GM12878 (cell line): ENCODE measurements at regions of chr9 and their contacts with region 1.

Region 1: GRCh38 chr9:38195737-38196161 is 126.7 kb upstream of the SHB start:
- DNase-seq: no peak
- ATAC-seq: no peak
- H3K4me3 ChIP-seq: no peak overlapping the region
- H3K27ac ChIP-seq: no peak overlapping the region
- H3K4me1 ChIP-seq: no peaks in the 10 kb centered on the region; the same call in 1 of the 2 replicates
- H3K27me3 ChIP-seq: no peaks in the 10 kb centered on the region; a peak in 1 of 4 replicates
- CTCF ChIP-seq: no peak
- EP300 ChIP-seq: no peak
- POLR2A ChIP-seq: no peak
- RAD21 ChIP-seq: no peak

Region 2: GRCh38 chr9:37880916-37881479 is 314.8 kb before region 1 on chr9:
- CTCF ChIA-PET with region 1: no interaction called
- POLR2A ChIA-PET with region 1: interaction called, 10 read pairs
- RAD21 ChIA-PET with region 1: no interaction called
- SMC1A ChIA-PET with region 1: no interaction called
- in situ Hi-C with region 1: no loop called
- intact Hi-C with region 1: no loop called
- DNase-seq: no peak
- ATAC-seq: no peak
- H3K4me3 ChIP-seq: no peak overlapping the region
- H3K27ac ChIP-seq: no peak overlapping the region
- H3K4me1 ChIP-seq: no peaks in the 10 kb centered on the region
- H3K27me3 ChIP-seq: no peaks in the 10 kb centered on the region
- CTCF ChIP-seq: no peak
- EP300 ChIP-seq: no peak
- POLR2A ChIP-seq: no peak
- RAD21 ChIP-seq: no peak

Region 3: GRCh38 chr9:38079461-38080031 is 116.2 kb before region 1 on chr9:
- CTCF ChIA-PET with region 1: no interaction called
- POLR2A ChIA-PET with region 1: no interaction called
- RAD21 ChIA-PET with region 1: no interaction called
- SMC1A ChIA-PET with region 1: no interaction called
- in situ Hi-C with region 1: no loop called
- intact Hi-C with region 1: no loop called
- DNase-seq: no peak
- ATAC-seq: no peak
- H3K4me3 ChIP-seq: no peak overlapping the region
- H3K27ac ChIP-seq: no peak overlapping the region
- H3K4me1 ChIP-seq: no peaks in the 10 kb centered on the region
- H3K27me3 ChIP-seq: no peaks in the 10 kb centered on the region
- CTCF ChIP-seq: no peak
- EP300 ChIP-seq: no peak
- POLR2A ChIP-seq: no peak
- RAD21 ChIP-seq: no peak

Region 4: DNA sequence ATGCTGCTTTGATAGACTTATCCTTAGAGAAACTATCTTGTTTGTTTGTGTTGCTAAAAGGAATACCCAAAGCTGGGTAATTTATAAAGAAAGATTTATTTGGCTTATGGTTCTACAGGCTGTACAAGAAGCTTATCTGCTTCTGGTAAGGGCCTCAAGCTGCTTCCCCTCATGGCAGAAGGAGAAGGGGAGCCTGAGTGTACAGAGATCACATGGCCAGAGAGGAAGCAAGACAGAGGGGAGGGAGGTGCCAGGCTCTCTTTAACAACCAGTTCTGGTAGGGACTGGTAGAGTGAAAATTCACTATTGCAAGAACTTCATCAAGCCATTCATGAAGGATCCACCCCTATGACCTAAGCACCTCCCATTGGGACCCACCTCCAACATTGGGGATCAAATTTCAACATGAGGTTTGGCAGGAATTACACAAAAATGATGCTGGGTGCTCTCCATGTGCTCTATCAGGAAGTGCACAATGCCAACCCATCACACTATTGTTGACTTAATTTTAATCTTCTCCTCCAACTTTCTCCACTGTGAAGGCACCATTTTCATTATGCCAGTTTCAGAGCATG is 11.7 kb before region 1 on chr9:
- CTCF ChIA-PET with region 1: interaction called, 8 read pairs
- POLR2A ChIA-PET with region 1: interaction called, 5 read pairs
- RAD21 ChIA-PET with region 1: interaction called, 4 read pairs
- SMC1A ChIA-PET with region 1: interaction called, 10 read pairs
- in situ Hi-C with region 1: no loop called
- intact Hi-C with region 1: no loop called
- DNase-seq: no peak
- ATAC-seq: no peak
- H3K4me3 ChIP-seq: no peak overlapping the region
- H3K27ac ChIP-seq: no peak overlapping the region
- H3K4me1 ChIP-seq: peaks cover 14% of the 10 kb centered on the region
- H3K27me3 ChIP-seq: peaks cover 0 to 2% of the 10 kb centered on the region in 2 experiments; a peak in 1 of 4 replicates
- CTCF ChIP-seq: no peak
- EP300 ChIP-seq: no peak
- POLR2A ChIP-seq: no peak
- RAD21 ChIP-seq: no peak

Region 5: DNA sequence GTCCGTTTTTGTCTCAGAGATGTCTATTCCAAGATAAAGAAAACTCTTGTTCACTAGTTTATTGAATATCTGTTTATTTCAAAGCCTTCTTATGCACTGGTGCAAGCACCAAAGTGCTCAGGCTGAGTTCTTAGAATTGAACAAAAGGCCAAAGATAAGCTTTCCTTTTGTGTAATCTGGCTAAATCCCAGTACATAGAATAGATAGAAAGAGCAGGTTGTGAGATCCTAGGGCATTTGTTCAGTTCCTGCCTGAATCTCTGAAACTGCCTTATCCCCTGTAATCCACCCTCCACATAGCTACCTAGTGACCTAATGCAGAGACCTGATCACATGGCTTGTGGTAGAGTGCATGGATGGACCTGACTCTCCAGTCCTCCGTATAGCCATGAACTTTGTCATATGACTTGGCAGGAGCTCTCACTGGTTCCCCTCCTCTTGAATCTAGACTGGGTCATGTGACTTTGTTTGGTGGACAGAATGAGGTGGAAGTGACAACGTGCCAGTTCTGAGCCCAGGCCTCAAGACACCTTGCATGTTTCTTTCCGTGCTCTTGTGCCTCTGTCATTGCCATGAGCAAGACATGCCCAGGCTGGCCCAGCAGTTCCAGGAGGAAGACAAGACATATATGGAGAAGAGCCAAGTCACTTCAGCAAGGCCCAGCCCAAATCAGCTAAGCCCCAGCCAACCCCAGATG is 12.6 kb after region 1 on chr9:
- CTCF ChIA-PET with region 1: interaction called, 4 read pairs
- POLR2A ChIA-PET with region 1: interaction called, 3 read pairs
- RAD21 ChIA-PET with region 1: interaction called, 5 read pairs
- SMC1A ChIA-PET with region 1: interaction called, 12 read pairs
- in situ Hi-C with region 1: no loop called
- intact Hi-C with region 1: no loop called
- DNase-seq: no peak
- ATAC-seq: no peak; the same call in 2 of the 3 replicates
- H3K4me3 ChIP-seq: no peak overlapping the region
- H3K27ac ChIP-seq: no peak overlapping the region
- H3K4me1 ChIP-seq: no peaks in the 10 kb centered on the region
- H3K27me3 ChIP-seq: no peaks in the 10 kb centered on the region
- CTCF ChIP-seq: no peak
- EP300 ChIP-seq: no peak
- POLR2A ChIP-seq: no peak
- RAD21 ChIP-seq: no peak